ENCODE measurements at regions of chr5 and their contacts with region 1.

Region 1: DNA sequence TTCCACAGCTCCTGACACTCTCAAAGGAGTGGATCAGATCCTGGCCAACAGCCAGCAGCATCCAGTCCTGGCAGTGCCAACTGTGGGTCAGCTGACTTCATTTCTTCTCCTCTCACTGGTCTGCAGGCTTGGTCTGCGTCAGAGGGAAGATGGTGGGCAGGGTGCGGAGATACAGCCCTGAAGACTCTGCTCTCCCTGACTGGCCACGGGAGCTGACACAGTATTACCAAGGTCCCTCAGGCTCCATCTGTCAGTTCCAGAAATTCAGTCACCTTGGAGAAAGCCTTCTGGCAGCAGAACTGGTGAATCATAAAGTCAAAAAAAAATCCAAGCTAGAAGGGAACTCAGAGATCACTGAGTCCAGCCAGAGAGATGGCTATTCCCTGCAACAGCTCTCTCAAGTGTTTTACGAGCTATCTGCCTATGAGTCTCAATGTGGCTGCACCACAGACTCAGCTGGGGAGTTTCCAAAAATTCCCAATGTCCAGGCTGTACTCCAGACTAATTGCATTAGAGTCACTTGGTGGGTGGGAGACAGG is 28.0 kb downstream of the C1QTNF2 start:
- DNase-seq: no peak
- ATAC-seq: no peak
- H3K4me3 ChIP-seq: no peak overlapping the region
- H3K4me3 Mint-ChIP-seq: no peak overlapping the region
- H3K27ac ChIP-seq: no peak overlapping the region
- H3K27ac Mint-ChIP-seq: no peak overlapping the region
- H3K4me1 ChIP-seq: no peaks in the 10 kb centered on the region
- H3K4me1 Mint-ChIP-seq: peaks cover 0 to 4% (median 0%) of the 10 kb centered on the region in 7 donors
- H3K27me3 ChIP-seq: no peaks in the 10 kb centered on the region
- H3K27me3 Mint-ChIP-seq: peaks cover 0 to 4% (median 0%) of the 10 kb centered on the region in 5 donors

Region 2: GRCh38 chr5:160079753-160080152 is 262.7 kb before region 1 on chr5:
- CTCF ChIA-PET with region 1: no interaction called
- POLR2A ChIA-PET with region 1: no interaction called
- intact Hi-C with region 1: loop called in 1 of 2 experiments (anchors 1 kb)
- DNase-seq: no peak
- ATAC-seq: no peak
- H3K4me3 ChIP-seq: no peak overlapping the region
- H3K4me3 Mint-ChIP-seq: no peak overlapping the region
- H3K27ac ChIP-seq: no peak overlapping the region
- H3K27ac Mint-ChIP-seq: peak overlapping the region in 2 of 9 donors; percentile 17 to 62
- H3K4me1 ChIP-seq: no peaks in the 10 kb centered on the region
- H3K4me1 Mint-ChIP-seq: peaks cover 0 to 4% (median 0%) of the 10 kb centered on the region in 7 donors
- H3K27me3 ChIP-seq: no peaks in the 10 kb centered on the region
- H3K27me3 Mint-ChIP-seq: no peaks in the 10 kb centered on the region

Region 3: GRCh38 chr5:160303690-160304089 is 38.8 kb before region 1 on chr5:
- CTCF ChIA-PET with region 1: no interaction called
- POLR2A ChIA-PET with region 1: no interaction called
- intact Hi-C with region 1: no loop called
- DNase-seq: no peak
- ATAC-seq: no peak
- H3K4me3 ChIP-seq: no peak overlapping the region
- H3K4me3 Mint-ChIP-seq: no peak overlapping the region
- H3K27ac ChIP-seq: no peak overlapping the region
- H3K27ac Mint-ChIP-seq: peak overlapping the region in 1 of 9 donors; percentile 27
- H3K4me1 ChIP-seq: no peaks in the 10 kb centered on the region
- H3K4me1 Mint-ChIP-seq: no peaks in the 10 kb centered on the region
- H3K27me3 ChIP-seq: no peaks in the 10 kb centered on the region
- H3K27me3 Mint-ChIP-seq: peaks cover 5 to 38% (median 8%) of the 10 kb centered on the region in 5 donors

Region 4: GRCh38 chr5:160390787-160391696 is 48.6 kb after region 1 on chr5:
- CTCF ChIA-PET with region 1: interaction called, 3 read pairs
- POLR2A ChIA-PET with region 1: no interaction called
- intact Hi-C with region 1: loop called in 1 of 2 experiments (anchors 1 kb)
- DNase-seq: peak in 2 of 9 donors; percentile 17 to 29
- ATAC-seq: no peak
- H3K4me3 ChIP-seq: no peak overlapping the region
- H3K4me3 Mint-ChIP-seq: no peak overlapping the region
- H3K27ac ChIP-seq: no peak overlapping the region
- H3K27ac Mint-ChIP-seq: no peak overlapping the region
- H3K4me1 ChIP-seq: no peaks in the 10 kb centered on the region
- H3K4me1 Mint-ChIP-seq: no peaks in the 10 kb centered on the region
- H3K27me3 ChIP-seq: no peaks in the 10 kb centered on the region
- H3K27me3 Mint-ChIP-seq: peaks cover 0 to 5% (median 0%) of the 10 kb centered on the region in 5 donors

Region 5: DNA sequence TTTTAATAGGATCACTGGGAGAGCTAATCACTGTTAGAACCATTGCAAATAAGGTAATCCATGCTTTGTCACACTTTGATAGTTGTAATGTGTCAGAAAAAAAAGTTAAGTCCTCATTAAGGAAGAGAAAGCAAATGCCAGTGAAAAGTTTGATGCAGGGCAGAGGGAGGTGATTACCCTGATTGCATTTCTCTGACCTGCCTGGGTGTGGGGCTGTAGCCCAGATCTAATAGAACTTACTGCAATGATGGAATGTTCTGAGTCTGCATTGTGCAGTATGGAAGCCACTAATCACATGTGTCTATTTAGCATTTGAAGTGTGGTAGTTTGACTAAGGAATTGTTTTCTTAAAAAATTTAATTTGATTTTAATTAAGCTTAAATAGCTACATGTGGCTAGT is 306.8 kb after region 1 on chr5:
- CTCF ChIA-PET with region 1: no interaction called
- POLR2A ChIA-PET with region 1: no interaction called
- intact Hi-C with region 1: no loop called
- DNase-seq: no peak
- ATAC-seq: no peak
- H3K4me3 ChIP-seq: no peak overlapping the region
- H3K4me3 Mint-ChIP-seq: no peak overlapping the region
- H3K27ac ChIP-seq: no peak overlapping the region
- H3K27ac Mint-ChIP-seq: no peak overlapping the region
- H3K4me1 ChIP-seq: no peaks in the 10 kb centered on the region
- H3K4me1 Mint-ChIP-seq: no peaks in the 10 kb centered on the region
- H3K27me3 ChIP-seq: no peaks in the 10 kb centered on the region
- H3K27me3 Mint-ChIP-seq: peaks cover 0 to 6% (median 5%) of the 10 kb centered on the region in 5 donors

Region 6: DNA sequence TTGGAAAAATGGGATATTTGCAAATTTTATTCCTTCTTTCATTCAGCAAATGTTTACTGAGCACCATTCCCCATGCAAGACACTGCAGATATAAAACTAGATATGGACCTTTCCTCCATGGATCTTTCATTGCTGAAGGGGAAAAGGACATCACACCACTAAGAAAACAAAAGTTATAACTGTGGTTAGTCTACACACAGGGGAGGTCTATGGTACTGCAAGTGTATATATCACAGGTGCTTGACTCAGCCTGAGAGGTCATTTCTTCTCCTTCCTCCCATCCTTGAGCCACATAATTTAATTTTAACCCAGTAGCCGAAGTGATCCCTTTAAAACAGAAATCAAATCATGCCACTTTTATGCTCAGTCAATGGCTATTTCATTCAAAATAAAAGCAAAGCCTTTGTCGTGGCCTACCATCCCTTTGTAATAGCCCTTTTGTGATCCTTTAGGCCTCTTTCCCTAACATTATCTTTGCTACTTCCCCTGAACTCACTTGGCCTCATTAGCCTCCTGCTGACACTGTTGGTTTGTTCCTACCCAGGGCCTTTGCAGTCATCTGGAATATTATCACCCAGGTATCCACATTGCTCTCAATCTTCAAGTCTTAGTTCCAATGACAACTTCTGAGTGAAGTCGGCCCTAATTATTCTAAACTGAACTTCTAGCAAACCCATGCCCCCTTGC is 990.9 kb after region 1 on chr5:
- CTCF ChIA-PET with region 1: no interaction called
- POLR2A ChIA-PET with region 1: no interaction called
- intact Hi-C with region 1: no loop called
- DNase-seq: no peak
- ATAC-seq: no peak
- H3K4me3 ChIP-seq: no peak overlapping the region
- H3K4me3 Mint-ChIP-seq: no peak overlapping the region
- H3K27ac ChIP-seq: no peak overlapping the region
- H3K27ac Mint-ChIP-seq: no peak overlapping the region
- H3K4me1 ChIP-seq: no peaks in the 10 kb centered on the region
- H3K4me1 Mint-ChIP-seq: no peaks in the 10 kb centered on the region
- H3K27me3 ChIP-seq: no peaks in the 10 kb centered on the region
- H3K27me3 Mint-ChIP-seq: no peaks in the 10 kb centered on the region

Measured in naive thymus-derived CD4-positive, alpha-beta T cell (primary cell).